Activated B cell treated with CpG ODN at 0.5 μM for 24 hours (primary cell): ENCODE measurements at regions of chr19 and their contacts with region 1.

Region 1: DNA sequence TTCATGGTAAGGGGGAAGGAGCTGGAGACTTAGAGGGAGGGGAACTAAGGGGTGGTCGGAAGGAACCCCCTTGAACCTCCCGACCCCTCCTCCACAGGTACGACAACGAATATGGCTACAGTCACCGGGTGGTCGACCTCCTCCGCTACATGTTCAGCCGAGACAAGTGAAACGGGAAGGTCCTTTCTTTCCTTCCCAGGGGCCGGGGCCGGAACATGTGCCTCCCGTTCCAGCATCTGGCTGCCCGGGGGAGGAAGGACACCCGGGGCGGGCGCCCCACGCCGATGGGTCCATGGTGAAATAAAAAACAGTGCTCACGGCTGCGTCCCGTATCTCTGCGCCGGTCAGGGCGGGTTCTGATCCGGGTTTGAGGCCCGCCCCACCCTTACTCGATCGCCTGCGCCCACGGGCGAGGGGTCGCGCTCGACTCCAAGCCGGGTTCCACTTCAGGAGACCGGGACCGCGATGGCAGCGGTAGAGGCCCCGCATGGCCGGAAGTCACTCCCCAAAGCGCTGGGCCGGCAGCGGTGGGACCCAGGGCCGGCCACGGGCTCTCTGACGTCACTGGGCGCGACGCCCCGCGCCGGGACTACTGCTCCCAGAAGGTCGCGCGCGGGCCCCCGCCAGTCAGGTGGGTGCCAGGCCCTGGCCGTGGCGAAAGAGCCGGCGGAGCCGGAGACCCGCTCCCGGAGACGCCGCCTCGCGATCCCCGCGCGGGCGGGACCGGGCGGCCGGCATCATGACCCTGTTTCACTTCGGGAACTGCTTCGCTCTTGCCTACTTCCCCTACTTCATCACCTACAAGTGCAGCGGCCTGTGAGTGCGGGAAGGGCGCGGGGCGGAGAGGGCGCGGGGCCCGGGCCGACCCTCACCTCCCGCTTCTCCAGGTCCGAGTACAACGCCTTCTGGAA is at the start of gene TMEM147:
- DNase-seq: peak; percentile 84
- ATAC-seq: peak; percentile 89
- H3K4me3 Mint-ChIP-seq: peak within 1 kb of the TSS; percentile 88
- H3K27ac Mint-ChIP-seq: peak within 1 kb of the TSS; percentile 79
- H3K4me1 Mint-ChIP-seq: peaks cover 44% of the 10 kb centered on the region
- H3K27me3 Mint-ChIP-seq: no peaks in the 10 kb centered on the region
- CTCF ChIP-seq: no peak
- total RNA-seq, gene TMEM147: 46.9 and 55.3 TPM in 2 replicates

Region 2: DNA sequence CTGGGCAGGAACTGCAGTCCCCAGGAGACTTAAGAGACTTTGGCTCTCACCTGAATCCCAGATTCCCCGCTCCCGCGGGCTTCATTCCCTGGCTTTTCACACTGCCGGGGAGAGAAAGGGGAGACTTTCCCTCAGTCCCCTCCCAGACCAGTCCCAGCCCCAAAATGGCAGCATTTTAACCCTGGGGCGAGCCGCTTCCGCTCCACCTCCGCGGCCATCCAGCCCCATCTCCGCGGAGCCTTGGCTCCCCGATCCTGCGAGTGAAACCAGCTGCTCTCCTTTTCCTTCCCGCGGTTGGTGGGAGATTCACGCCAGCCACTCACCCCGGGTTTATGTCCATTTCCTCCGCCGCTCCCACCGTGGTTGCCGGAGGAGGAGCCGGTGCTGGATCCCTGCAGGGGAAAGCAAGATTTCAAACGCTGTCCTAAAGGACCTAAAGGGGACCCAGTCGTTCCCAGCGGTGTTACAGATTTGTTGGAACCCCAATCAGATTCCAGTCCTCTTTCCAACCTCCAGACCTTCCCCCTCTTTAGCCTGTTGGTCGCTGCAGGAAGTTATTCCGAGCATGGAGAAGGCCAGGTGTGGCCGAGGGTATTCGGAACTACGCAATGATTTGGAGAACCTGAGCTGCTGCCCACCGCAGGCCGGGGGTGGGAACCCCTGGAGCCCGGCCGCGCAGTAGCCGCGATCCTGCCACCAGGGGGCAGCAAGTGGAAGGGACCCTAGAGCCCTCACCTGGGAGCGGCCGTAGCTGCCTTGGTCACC is 35.2 kb before region 1 on chr19:
- CTCF ChIA-PET with region 1: interaction called, 3 read pairs
- POLR2A ChIA-PET with region 1: interaction called, 4 read pairs
- intact Hi-C with region 1: loop called (anchors 1 kb)
- DNase-seq: peak; percentile 76
- ATAC-seq: peak; percentile 91
- H3K4me3 Mint-ChIP-seq: peak overlapping the region; percentile 73
- H3K27ac Mint-ChIP-seq: no peak overlapping the region
- H3K4me1 Mint-ChIP-seq: peaks cover 17% of the 10 kb centered on the region
- H3K27me3 Mint-ChIP-seq: peaks cover 53% of the 10 kb centered on the region
- CTCF ChIP-seq: peak; percentile 86

Region 3: DNA sequence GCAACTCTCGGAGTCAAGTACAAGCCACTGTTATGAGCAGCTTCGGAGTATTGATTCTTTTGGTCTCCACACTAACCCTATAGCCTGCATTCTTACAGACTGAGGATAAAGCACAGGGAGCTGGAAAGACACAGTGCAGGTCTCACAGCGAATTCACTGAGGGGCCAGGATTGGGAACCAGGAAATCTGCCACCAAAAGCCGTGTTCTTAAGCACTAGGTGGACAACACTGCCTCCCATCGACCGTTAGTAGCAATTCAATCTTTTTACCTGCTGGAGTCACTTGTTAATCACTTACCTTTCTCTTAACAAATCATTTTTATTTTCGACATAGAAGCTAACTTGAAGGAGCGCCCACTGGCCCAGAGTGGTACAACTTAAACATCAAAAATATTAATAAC is 47.0 kb after region 1 on chr19:
- CTCF ChIA-PET with region 1: interaction called, 18 read pairs
- POLR2A ChIA-PET with region 1: no interaction called
- intact Hi-C with region 1: loop called (anchors 1 kb)
- DNase-seq: no peak
- ATAC-seq: peak; percentile 54
- H3K4me3 Mint-ChIP-seq: no peak overlapping the region
- H3K27ac Mint-ChIP-seq: no peak overlapping the region
- H3K4me1 Mint-ChIP-seq: no peaks in the 10 kb centered on the region
- H3K27me3 Mint-ChIP-seq: no peaks in the 10 kb centered on the region
- CTCF ChIP-seq: no peak

Region 4: DNA sequence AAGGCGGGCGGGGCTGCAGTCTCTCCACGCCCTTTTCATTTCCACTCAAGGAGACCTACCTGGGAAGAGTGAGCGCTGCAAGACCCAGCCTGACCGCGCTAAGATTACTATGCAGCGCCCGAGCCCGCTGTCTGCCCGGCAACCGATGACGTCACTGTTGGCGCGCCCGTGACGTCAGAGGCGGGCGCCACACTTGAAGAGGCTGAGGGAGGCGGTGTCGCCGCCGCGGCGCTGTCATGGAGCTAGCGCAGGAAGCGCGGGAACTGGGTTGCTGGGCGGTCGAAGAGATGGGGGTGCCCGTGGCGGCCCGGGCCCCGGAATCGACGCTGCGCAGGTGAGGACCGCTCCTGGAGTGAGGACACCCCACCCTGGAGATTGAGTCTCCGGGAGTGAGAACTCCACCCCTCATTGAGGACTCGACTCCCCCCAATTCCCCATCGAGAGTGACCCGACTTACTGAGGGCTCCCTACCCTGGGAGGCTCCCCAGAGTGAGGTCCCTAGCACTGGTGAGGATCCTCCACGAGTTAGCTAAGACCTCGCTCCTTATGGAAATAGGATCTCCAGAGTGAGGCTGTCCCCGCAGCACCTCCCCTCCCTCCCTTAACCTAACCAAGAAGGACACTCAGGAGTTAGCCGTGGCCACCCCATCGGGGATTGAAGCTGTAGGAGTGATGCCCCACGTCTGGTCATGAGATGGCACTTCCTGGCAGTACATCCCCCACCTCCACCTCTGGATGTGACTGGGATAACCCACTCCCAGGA is 67.5 kb after region 1 on chr19 and contains the start of gene HAUS5:
- CTCF ChIA-PET with region 1: interaction called, 3 read pairs
- POLR2A ChIA-PET with region 1: no interaction called
- intact Hi-C with region 1: loop called (anchors 1 kb)
- DNase-seq: peak; percentile 99
- ATAC-seq: peak; percentile 78
- H3K4me3 Mint-ChIP-seq: peak within 1 kb of the TSS; percentile 87
- H3K27ac Mint-ChIP-seq: peak within 1 kb of the TSS; percentile 93
- H3K4me1 Mint-ChIP-seq: peaks cover 48% of the 10 kb centered on the region
- H3K27me3 Mint-ChIP-seq: no peaks in the 10 kb centered on the region
- CTCF ChIP-seq: no peak
- total RNA-seq, gene HAUS5: 31.5 and 36.1 TPM in 2 replicates

Region 5: GRCh38 chr19:35648017-35648961 is 103.0 kb after region 1 on chr19 and contains the start of gene COX6B1:
- CTCF ChIA-PET with region 1: no interaction called
- POLR2A ChIA-PET with region 1: interaction called, 3 read pairs
- intact Hi-C with region 1: loop called (anchors 5 kb)
- DNase-seq: peak; percentile 72
- ATAC-seq: peak; percentile 66
- H3K4me3 Mint-ChIP-seq: peak within 1 kb of the TSS; percentile 96
- H3K27ac Mint-ChIP-seq: peak within 1 kb of the TSS; percentile 87
- H3K4me1 Mint-ChIP-seq: peaks cover 37% of the 10 kb centered on the region
- H3K27me3 Mint-ChIP-seq: no peaks in the 10 kb centered on the region
- CTCF ChIP-seq: no peak
- total RNA-seq, gene COX6B1: 334 and 401 TPM in 2 replicates

Region 6: DNA sequence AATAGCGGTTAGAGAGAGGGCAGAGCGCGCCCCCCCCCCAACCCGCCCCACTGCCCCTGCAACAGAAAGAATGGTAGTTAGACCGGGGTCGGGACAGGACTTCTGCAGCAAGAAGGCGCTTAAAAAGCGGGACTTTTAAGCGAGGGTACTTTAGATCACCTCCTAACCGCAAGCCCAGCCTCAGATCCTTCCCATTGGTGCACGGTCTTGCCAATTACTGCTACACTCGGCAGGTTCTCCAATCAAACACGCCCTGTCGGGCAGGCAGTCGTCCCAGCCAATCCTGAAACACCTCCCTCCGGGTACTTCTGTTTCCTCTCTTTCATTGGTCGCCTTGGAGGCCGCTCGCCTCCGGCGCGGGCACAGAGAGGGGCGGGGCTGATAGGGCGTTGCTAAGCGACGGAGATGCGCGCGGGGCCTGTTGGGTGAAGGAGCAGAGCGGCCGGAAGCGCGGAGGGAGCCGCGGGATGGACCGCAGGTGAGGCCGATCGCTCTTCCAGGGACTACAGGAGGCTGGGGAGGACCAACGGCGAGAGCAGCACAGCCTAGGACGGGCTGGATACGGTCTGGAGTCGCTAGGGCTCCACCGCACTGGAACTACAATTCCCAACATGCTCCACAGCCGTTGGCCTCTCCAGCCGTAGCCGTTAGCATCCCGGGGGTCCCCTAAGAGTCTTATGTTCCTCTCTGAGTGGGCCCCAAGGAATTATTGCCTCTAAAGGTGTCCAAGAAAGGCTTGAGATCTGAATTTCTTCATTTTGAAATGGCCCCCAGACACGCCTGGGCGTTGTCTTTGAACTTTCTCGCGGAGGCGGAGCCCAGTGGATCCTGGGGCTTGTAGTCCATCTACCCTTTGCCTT is 212.7 kb after region 1 on chr19 and contains the start of gene PROSER3:
- CTCF ChIA-PET with region 1: no interaction called
- POLR2A ChIA-PET with region 1: no interaction called
- intact Hi-C with region 1: loop called (anchors 5 kb)
- DNase-seq: peak; percentile 94
- ATAC-seq: peak; percentile 95
- H3K4me3 Mint-ChIP-seq: peak within 1 kb of the TSS; percentile 97
- H3K27ac Mint-ChIP-seq: peak within 1 kb of the TSS; percentile 96
- H3K4me1 Mint-ChIP-seq: peaks cover 33% of the 10 kb centered on the region
- H3K27me3 Mint-ChIP-seq: peaks cover 15% of the 10 kb centered on the region
- CTCF ChIP-seq: no peak
- total RNA-seq, gene PROSER3: 43.7 and 60.5 TPM in 2 replicates